ENCODE measurements at regions of chr17 and their contacts with region 1.

Region 1: DNA sequence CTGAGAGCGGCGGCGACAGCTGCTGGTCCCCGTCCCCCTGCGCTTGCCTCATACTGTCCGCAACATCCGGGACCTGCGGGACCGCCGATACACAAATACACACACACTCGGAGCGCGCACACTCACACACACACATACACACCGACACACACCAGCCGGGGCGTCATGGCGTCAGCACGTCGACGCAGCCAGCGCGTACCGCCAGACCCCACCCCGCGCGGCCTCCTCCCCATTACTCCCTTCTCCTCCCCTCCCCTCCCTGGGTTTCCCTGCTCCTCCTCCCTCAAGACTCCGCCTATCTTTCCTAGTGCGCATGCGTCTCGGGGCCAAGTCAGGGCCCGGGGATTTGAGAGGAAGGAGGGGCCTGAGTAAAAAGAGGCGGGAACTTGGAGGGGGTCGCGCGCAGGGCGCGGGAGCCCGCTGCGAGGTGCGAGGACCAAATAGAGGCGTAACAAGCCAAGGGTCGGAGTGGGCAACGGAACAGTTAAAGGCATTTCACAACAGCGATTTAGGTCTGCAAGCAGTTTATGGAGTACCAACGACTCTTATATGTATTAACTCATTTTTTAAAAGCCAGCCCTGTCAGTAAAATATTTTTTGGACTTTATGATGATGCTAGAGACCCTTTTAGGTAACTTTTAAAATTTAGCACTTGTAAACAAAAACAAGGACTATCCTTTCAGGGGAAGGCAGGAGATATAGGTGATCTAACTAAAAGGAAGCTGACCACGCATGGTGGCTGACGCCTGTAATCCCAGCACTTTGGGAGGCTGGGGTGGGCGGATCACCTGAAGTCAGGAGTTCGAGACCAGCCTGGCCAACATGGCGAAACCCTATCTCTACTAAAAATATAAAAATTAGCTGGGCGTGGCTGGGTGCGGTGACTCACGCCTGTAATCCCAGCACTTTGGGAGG is at the start of gene SPOP:
- DNase-seq: peak; percentile 99
- H3K4me3 ChIP-seq: peak within 1 kb of the TSS; percentile 73
- H3K27ac ChIP-seq: peak within 1 kb of the TSS; percentile 92
- H3K4me1 ChIP-seq: peaks cover 14% of the 10 kb centered on the region
- H3K27me3 ChIP-seq: no peaks in the 10 kb centered on the region
- CTCF ChIP-seq: no peak
- total RNA-seq, gene SPOP: 53.4 and 66.6 TPM in 2 replicates

Region 2: GRCh38 chr17:49522357-49522890 is 155.8 kb before region 1 on chr17:
- CTCF ChIA-PET with region 1: no interaction called
- POLR2A ChIA-PET with region 1: interaction called, 10 read pairs
- intact Hi-C with region 1: no loop called
- DNase-seq: no peak
- H3K4me3 ChIP-seq: no peak overlapping the region
- H3K27ac ChIP-seq: no peak overlapping the region
- H3K4me1 ChIP-seq: no peaks in the 10 kb centered on the region
- H3K27me3 ChIP-seq: no peaks in the 10 kb centered on the region
- CTCF ChIP-seq: no peak

Region 3: GRCh38 chr17:49814781-49815529 is 136.8 kb after region 1 on chr17:
- CTCF ChIA-PET with region 1: interaction called, 17 read pairs
- POLR2A ChIA-PET with region 1: no interaction called
- intact Hi-C with region 1: no loop called
- DNase-seq: peak; percentile 72
- H3K4me3 ChIP-seq: no peak overlapping the region
- H3K27ac ChIP-seq: peak overlapping the region; percentile 28
- H3K4me1 ChIP-seq: peaks cover 40% of the 10 kb centered on the region
- H3K27me3 ChIP-seq: no peaks in the 10 kb centered on the region
- CTCF ChIP-seq: no peak